Activated CD8-positive, alpha-beta T cell treated with anti-CD3 and anti-CD28 coated beads for 36 hours (primary cell): ENCODE measurements at regions of chr2 and their contacts with region 1.

Region 1: DNA sequence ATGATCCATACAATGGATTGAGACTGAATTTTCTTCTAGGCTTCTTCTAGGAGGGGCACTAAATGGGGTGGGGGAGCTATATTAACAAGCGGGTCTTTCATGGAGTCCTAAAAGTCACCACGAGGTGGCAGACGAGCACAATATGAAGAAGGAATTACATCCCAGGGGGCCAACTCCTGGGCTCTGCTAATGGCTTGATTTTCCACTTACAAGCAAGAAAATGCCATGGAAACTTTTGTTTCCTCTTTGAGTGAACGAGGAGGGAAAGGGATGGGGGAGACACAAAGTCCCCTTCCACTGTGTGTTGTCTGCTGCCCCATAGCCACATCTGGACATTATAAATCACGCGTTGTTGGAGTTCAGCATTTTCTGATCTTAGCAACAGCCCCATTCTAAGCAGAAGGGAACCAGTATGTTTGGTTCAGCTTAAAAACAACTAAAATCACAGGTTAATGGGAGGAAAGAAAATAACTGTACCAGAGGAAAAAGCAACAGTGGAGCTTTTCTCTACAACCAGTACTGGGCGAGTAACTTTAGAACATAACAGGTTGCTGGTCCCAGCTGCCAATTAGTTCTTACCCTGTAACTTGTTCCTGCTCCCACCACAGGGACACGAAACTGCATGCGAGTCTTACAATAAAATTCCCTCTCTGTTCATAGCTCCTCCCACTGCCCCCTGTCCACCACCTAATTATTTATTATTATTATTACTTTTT is 285.0 kb upstream of the PARD3B start:
- DNase-seq: peak; percentile 73
- ATAC-seq: peak; percentile 24
- H3K4me3 Mint-ChIP-seq: no peak overlapping the region
- H3K27ac Mint-ChIP-seq: no peak overlapping the region
- H3K4me1 Mint-ChIP-seq: no peaks in the 10 kb centered on the region
- H3K27me3 Mint-ChIP-seq: peaks cover 26% of the 10 kb centered on the region
- CTCF ChIP-seq: peak; percentile 72

Region 2: DNA sequence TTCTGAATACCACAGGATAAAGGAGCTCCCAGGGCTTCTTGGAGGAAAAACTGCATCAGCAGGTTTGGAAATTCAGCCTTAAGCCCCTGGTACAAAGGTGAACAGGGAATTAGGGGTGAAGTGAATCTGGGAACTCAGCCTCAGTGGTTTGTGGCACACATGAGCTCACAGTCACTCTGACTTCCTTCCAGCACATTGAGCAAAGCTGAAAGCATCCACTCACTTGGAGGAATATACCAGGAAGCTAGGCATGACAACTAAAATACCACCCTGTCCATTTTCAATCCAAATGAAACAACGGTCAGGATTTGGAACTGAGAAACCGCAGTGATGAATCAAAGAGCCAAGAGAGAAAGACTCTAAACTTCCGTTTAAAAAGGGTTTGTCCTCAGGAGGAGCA is 107.7 kb before region 1 on chr2:
- CTCF ChIA-PET with region 1: no interaction called
- POLR2A ChIA-PET with region 1: no interaction called
- intact Hi-C with region 1: no loop called
- DNase-seq: no peak
- ATAC-seq: no peak
- H3K4me3 Mint-ChIP-seq: no peak overlapping the region
- H3K27ac Mint-ChIP-seq: no peak overlapping the region
- H3K4me1 Mint-ChIP-seq: no peaks in the 10 kb centered on the region
- H3K27me3 Mint-ChIP-seq: peaks cover 18% of the 10 kb centered on the region
- CTCF ChIP-seq: no peak

Region 3: DNA sequence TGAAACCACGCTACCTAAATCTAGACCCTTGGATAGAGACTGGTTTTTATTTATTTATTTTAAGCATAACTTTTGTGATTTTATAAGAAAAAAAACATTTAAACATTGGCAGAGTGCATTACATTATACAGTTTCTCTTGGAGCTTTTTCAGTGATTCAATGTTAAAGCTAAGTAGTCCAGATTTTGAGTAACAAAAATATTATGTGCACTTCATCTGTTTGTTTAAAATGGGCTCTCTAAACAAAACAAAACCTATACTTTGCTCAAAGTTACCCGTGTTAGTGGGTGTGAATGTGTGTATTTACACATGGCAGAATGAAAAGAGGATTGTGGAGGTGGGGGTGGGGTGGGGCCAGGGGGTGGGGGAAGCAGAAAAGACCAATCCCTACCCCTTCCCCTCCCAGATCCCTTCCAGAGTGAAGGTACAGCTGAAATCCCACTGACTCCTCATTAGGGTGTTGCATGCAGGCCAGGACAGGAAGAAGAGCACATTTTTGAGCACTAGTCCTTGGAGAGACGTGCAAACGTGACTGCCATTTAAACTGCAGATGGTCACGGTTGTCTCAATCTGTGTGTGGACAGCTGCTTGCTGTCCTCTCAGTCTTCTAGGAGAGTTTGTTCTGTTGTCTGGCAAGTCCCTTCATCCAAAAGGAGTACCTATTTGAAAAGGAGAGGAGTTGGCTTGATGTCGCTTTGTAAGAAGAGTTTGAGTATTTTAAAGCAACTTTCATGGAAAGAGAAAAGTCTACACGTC is 20.7 kb before region 1 on chr2:
- CTCF ChIA-PET with region 1: interaction called, 11 read pairs
- POLR2A ChIA-PET with region 1: no interaction called
- intact Hi-C with region 1: no loop called
- DNase-seq: no peak
- ATAC-seq: no peak
- H3K4me3 Mint-ChIP-seq: no peak overlapping the region
- H3K27ac Mint-ChIP-seq: no peak overlapping the region
- H3K4me1 Mint-ChIP-seq: peaks cover 12% of the 10 kb centered on the region
- H3K27me3 Mint-ChIP-seq: peaks cover 10% of the 10 kb centered on the region
- CTCF ChIP-seq: no peak

Region 4: GRCh38 chr2:204298404-204298803 is 38.1 kb after region 1 on chr2:
- CTCF ChIA-PET with region 1: interaction called, 11 read pairs
- POLR2A ChIA-PET with region 1: no interaction called
- intact Hi-C with region 1: no loop called
- DNase-seq: no peak
- ATAC-seq: no peak
- H3K4me3 Mint-ChIP-seq: no peak overlapping the region
- H3K27ac Mint-ChIP-seq: no peak overlapping the region
- H3K4me1 Mint-ChIP-seq: no peaks in the 10 kb centered on the region
- H3K27me3 Mint-ChIP-seq: no peaks in the 10 kb centered on the region
- CTCF ChIP-seq: no peak